ENCODE measurements at regions of chr2 and their contacts with region 1.

Region 1: DNA sequence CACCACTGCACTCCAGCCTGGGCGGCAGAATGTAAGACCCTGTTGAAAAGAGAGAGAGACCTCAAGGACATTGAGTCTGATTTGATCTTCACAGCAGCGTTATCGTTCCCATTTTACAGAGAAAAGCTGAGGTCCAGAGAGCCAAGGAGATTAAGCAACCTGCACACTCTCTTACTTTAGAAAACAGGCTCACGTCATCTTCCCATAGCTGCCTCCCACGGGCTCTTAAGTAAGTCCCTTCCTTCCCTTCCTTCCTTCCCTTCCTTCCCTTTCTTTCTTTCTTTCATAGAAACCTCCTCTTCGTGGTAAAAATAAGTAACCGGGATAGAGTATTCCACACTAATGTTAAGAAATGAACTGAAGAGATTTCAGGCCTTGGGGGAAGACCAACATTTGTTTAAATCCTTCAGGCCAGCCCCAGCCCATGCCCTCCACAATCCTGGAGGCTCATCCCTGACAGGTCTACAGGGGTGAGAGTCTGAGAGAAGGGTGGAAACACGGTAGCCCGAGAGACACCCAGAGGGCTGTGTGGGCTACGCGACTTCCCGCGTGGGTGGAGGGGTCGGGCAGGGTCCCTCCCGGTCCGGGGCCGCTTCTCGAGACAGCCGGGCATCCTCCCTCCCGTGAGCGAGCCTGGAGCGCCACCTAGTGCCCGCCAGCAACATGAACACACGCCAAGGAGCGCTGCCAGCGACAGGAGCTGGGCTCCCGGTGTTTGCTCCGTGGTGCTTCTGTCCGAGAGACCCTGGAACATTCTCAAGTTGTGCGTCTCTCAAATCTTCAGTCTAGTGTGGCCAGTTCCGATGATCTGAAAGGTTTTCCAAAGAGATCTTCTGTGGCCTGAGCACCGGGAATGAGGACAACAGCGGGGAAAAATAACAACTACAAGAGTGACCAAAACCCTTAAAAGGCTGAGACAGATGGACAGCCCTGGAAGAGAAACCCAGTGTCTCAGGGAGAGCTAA is 160.3 kb downstream of the INO80D start:
- DNase-seq: peak; percentile 79
- H3K4me3 ChIP-seq: peak overlapping the region in 1 of 3 experiments; percentile 47
- H3K27ac ChIP-seq: no peak overlapping the region
- H3K4me1 ChIP-seq: peaks cover 17% of the 10 kb centered on the region
- H3K27me3 ChIP-seq: peaks cover 5 to 6% of the 10 kb centered on the region in 2 experiments
- CTCF ChIP-seq: peak; percentile 92 to 96
- POLR2A ChIP-seq: no peak

Region 2: GRCh38 chr2:204260162-204260877 is 1665.3 kb before region 1 on chr2:
- CTCF ChIA-PET with region 1: interaction called, 26 read pairs
- POLR2A ChIA-PET with region 1: no interaction called
- dilution Hi-C with region 1: no loop called
- intact Hi-C with region 1: loop called (anchors 1 kb)
- DNase-seq: peak; percentile 86
- H3K4me3 ChIP-seq: no peak overlapping the region
- H3K27ac ChIP-seq: no peak overlapping the region
- H3K4me1 ChIP-seq: peaks cover 6% of the 10 kb centered on the region
- H3K27me3 ChIP-seq: peaks cover 0 to 2% of the 10 kb centered on the region in 2 experiments
- CTCF ChIP-seq: peak; percentile 63 to 72
- POLR2A ChIP-seq: no peak

Region 3: GRCh38 chr2:205343103-205343502 is 582.6 kb before region 1 on chr2:
- CTCF ChIA-PET with region 1: no interaction called
- POLR2A ChIA-PET with region 1: no interaction called
- dilution Hi-C with region 1: no loop called
- intact Hi-C with region 1: no loop called
- DNase-seq: no peak
- H3K4me3 ChIP-seq: no peak overlapping the region
- H3K27ac ChIP-seq: no peak overlapping the region
- H3K4me1 ChIP-seq: no peaks in the 10 kb centered on the region
- H3K27me3 ChIP-seq: no peaks in the 10 kb centered on the region
- CTCF ChIP-seq: no peak
- POLR2A ChIP-seq: no peak

Region 4: DNA sequence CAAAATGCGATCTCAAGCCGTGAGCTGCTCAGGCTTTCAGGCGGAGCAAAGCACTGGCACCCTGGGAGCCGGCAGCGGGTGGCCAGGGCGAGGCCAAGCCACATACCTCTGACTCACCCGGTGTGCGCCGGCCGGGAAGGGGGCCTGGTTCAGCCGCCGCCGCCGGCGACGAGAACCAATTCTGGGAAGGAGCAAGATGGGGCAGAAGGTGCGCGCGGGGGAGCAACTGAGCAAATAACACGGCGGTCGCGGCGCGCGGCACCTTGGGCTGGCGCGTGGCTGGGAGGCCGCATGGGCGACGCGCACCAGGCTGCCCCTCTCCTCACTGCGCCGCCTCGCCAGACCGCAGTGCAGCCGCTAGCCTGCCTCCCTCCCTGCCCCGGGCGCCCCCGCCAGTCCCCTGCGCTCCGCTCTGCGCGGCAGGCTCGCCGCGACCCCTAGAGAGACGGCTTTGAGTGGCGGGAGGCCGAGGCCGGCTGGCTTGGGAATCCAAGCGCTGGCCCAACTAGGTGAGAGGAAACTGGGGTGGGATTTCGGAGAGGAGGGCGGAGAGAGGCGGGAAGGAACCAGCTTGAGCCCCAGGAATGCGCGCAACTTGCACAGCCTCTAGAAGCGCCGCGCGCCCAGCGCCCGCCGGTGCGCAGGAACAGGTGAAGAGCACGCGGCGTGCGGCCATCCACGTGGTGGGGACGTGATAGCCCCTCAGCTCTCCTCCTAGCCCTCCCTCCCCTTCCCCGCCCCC is 240.2 kb before region 1 on chr2:
- CTCF ChIA-PET with region 1: interaction called, 21 read pairs
- POLR2A ChIA-PET with region 1: no interaction called
- dilution Hi-C with region 1: no loop called
- intact Hi-C with region 1: loop called (anchors 1 kb)
- DNase-seq: peak; percentile 40
- H3K4me3 ChIP-seq: peak overlapping the region; percentile 67 to 99 (median 96)
- H3K27ac ChIP-seq: peak overlapping the region; percentile 48
- H3K4me1 ChIP-seq: peaks cover 51% of the 10 kb centered on the region
- H3K27me3 ChIP-seq: no peaks in the 10 kb centered on the region
- CTCF ChIP-seq: no peak
- POLR2A ChIP-seq: no peak

Region 5: DNA sequence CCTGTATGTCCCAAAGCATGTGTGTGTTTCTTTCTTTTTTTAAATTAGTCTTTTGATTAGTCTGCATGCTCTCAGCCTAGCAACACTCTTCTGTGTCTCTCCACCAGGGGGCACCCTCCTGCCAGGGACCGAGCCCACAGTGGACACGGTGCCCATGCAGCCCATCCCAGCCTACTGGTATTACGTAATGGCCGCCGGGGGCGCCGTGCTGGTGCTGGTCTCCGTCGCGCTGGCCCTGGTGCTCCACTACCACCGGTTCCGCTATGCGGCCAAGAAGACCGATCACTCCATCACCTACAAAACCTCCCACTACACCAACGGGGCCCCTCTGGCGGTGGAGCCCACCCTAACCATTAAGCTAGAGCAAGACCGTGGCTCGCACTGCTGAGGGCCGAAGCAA is 149.5 kb before region 1 on chr2:
- CTCF ChIA-PET with region 1: interaction called, 30 read pairs
- POLR2A ChIA-PET with region 1: no interaction called
- dilution Hi-C with region 1: no loop called
- intact Hi-C with region 1: loop called (anchors 1 kb)
- DNase-seq: no peak
- H3K4me3 ChIP-seq: no peak overlapping the region
- H3K27ac ChIP-seq: no peak overlapping the region
- H3K4me1 ChIP-seq: peaks cover 9% of the 10 kb centered on the region
- H3K27me3 ChIP-seq: no peaks in the 10 kb centered on the region
- CTCF ChIP-seq: peak; percentile 63 to 71
- POLR2A ChIP-seq: no peak

Region 6: GRCh38 chr2:205903638-205904037 is 22.0 kb before region 1 on chr2:
- CTCF ChIA-PET with region 1: interaction called, 51 read pairs
- POLR2A ChIA-PET with region 1: no interaction called
- dilution Hi-C with region 1: no loop called
- intact Hi-C with region 1: loop called (anchors 1 kb)
- DNase-seq: peak; percentile 30
- H3K4me3 ChIP-seq: no peak overlapping the region
- H3K27ac ChIP-seq: no peak overlapping the region
- H3K4me1 ChIP-seq: no peaks in the 10 kb centered on the region
- H3K27me3 ChIP-seq: peaks cover 0 to 5% of the 10 kb centered on the region in 2 experiments
- CTCF ChIP-seq: peak; percentile 40 to 69
- POLR2A ChIP-seq: no peak

Region 7: GRCh38 chr2:205947621-205948495 is 22.2 kb after region 1 on chr2:
- CTCF ChIA-PET with region 1: interaction called, 145 read pairs
- POLR2A ChIA-PET with region 1: no interaction called
- dilution Hi-C with region 1: no loop called
- intact Hi-C with region 1: loop called (anchors 1 kb)
- DNase-seq: peak; percentile 74
- H3K4me3 ChIP-seq: no peak overlapping the region
- H3K27ac ChIP-seq: no peak overlapping the region
- H3K4me1 ChIP-seq: peaks cover 17% of the 10 kb centered on the region
- H3K27me3 ChIP-seq: peaks cover 3 to 7% of the 10 kb centered on the region in 2 experiments
- CTCF ChIP-seq: peak; percentile 84 to 94
- POLR2A ChIP-seq: no peak

Measured in endothelial cell of umbilical vein (primary cell).